Sciatic nerve (tissue), 2 donors: ENCODE measurements at regions of chr11 and their contacts with region 1.

Region 1: GRCh38 chr11:80831374-80831773 is 1390.5 kb upstream of the TENM4 start:
- DNase-seq: no peak
- ATAC-seq: no peak

Region 2: DNA sequence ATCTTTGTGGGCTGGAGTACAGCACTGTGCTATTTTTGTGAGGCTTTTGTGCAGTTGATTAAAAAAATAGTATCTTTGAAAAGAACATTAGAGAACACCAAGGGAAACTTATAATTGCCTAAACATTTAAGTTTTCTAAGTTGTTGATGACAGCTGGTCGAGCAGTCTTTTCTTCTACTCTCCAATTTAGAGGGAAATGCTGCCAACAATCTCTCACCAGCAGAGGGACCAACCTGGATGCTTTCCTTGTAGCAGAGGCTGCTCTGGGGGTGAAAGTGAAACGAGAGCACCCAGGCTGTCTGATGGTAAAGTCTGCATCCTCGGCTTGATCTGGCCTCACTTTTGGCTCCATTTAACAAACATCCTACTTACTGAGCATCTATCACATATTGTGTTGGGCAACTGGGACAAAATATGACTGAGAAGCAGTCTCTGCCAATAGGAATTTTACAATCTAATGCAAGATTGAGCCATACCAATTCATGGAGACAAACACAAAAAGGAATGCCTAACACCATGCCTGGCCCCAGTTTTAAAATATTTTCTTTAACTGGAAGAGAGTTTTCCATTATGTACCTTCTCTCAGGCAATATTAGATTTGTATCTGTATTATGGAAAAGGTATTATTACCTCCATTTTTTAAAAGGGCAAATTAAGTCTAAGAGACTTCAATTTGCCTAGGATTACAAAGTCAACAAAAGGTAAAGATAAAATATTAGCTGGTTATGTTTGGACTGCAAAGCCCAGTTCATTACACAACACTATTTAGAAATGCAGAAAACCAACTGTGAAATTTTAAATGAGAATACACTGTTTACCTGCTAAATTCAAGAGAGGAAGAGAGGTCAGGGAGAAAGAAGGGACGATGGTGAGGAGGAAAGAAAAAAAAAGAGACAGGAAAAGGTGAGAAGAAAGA is 103.8 kb before region 1 on chr11:
- intact Hi-C with region 1: no loop called
- DNase-seq: no peak
- ATAC-seq: no peak

Region 3: GRCh38 chr11:80748211-80748925 is 83.0 kb before region 1 on chr11:
- intact Hi-C with region 1: loop called (anchors 2 kb)
- DNase-seq: no peak
- ATAC-seq: no peak